ENCODE measurements at regions of chr5 and their contacts with region 1.

Region 1: DNA sequence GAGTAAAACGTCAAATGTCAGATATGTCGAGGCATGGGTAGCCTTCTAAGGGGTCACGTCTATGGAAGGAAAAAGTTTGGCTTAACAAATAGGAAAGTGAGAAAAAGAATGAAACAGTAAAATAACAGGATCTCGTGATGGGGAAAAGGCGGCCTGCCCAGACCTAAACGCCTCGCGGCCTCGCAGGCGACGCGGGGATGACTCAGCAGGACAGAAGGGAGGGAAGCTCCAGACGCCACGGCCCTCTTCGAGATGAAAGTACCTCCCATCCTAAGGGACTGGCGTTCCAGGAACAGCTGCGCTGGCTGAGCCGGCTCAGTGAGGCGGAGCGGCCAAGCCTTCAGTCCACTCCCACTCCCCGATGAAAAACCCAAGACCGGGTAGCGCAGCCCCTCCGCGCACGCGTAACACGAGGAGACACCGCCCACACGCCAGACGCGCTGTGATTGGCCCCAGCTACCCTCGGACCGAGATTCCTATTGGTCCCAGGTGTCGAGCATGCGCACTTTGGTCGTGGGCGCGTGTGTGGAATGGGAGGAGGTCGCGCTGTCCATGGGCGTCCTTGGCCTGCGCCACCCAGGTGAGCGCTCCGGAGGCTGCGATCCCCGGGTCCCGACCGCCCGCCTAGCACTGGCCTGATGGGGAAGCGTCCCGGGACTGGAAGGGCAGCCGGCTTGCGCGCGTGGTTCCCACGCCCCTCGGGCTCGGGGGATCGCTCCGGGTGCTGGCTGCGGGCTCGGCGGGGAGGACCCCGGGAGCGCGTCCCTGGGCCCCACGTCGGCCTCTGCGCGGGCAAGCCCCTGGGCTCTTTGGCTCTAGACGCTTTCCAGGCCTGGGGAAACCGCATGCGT is 588.5 kb downstream of the MTRR start:
- DNase-seq: peak; percentile 92
- ATAC-seq: peak; percentile 96
- H3K4me3 Mint-ChIP-seq: peak overlapping the region; percentile 81
- H3K27ac Mint-ChIP-seq: peak overlapping the region; percentile 71
- H3K4me1 Mint-ChIP-seq: peaks cover 20% of the 10 kb centered on the region
- H3K27me3 Mint-ChIP-seq: no peaks in the 10 kb centered on the region

Region 2: DNA sequence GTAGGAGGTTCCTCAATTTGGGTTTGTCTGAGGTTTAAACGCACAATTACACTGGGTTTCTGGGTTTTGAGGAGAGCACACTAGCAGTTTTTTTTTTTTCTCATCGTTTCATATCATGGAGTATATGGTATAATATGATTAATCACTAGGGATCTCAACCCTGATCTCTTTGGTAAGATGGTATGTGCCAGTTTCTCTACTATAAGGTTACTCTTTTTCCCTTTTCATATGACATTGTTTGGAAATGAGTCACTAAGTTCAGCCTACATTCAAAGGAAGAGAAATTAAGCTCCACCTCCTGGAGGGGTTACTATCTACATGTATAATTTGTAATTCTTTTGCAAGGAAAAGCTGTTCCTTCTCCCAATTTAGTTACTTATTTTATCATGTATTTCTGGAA is 553.2 kb before region 1 on chr5:
- CTCF ChIA-PET with region 1: no interaction called
- POLR2A ChIA-PET with region 1: no interaction called
- intact Hi-C with region 1: loop called in 1 of 2 experiments (anchors 10 kb)
- DNase-seq: no peak
- ATAC-seq: peak; percentile 90
- H3K4me3 Mint-ChIP-seq: no peak overlapping the region
- H3K27ac Mint-ChIP-seq: peak overlapping the region; percentile 47
- H3K4me1 Mint-ChIP-seq: peaks cover 28% of the 10 kb centered on the region
- H3K27me3 Mint-ChIP-seq: no peaks in the 10 kb centered on the region

Measured in activated CD4-positive, alpha-beta T cell treated with anti-CD3 and anti-CD28 coated beads for 36 hours (primary cell).